CD4-positive, alpha-beta T cell (primary cell): ENCODE measurements at regions of chr13 and their contacts with region 1.

Region 1: GRCh38 chr13:94549232-94550061 is 46.5 kb downstream of the TGDS start:
- DNase-seq: peak; percentile 85 to 96 (median 92)
- ATAC-seq: peak; percentile 91
- H3K4me3 ChIP-seq: peak overlapping the region; percentile 75
- H3K4me3 Mint-ChIP-seq: peak overlapping the region; percentile 96
- H3K27ac ChIP-seq: peak overlapping the region; percentile 85 to 91
- H3K27ac Mint-ChIP-seq: peak overlapping the region; percentile 98
- H3K4me1 ChIP-seq: peaks cover 28% of the 10 kb centered on the region
- H3K4me1 Mint-ChIP-seq: peaks cover 22% of the 10 kb centered on the region
- H3K27me3 ChIP-seq: no peaks in the 10 kb centered on the region
- H3K27me3 Mint-ChIP-seq: peaks cover 7% of the 10 kb centered on the region
- CTCF ChIP-seq: no peak

Region 2: DNA sequence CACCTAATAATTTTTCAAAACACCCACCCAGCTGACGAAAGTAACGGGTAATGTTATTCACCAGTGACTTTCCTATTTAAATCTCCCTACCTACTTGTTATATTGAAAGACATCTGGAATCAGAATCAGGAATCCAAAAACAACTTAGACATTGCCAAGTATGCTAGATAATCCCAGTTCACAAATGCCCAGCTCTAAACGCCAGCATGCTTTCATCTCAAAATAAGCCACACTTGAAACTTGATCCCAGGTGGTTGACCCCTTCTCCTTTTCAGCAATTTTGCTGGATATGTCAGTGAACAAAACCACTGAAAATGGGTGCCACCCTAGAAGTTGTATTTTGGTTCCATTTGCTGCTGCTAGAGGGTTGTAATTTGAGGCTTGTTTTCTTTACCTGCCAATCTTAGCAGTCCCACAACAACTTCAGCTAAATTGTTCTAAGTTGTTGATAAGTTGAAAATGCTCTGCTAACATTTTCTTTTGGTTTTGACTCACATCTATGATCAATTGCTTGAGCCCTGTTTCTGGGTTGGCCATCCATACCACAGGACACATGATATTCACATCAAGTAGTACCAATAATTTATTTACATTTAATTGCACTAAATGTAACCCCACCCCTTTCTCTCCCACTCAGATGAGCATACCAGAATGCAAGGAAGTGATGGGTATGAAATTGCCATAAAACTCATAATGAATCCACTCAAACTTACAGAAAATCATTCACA is 136.4 kb before region 1 on chr13:
- CTCF ChIA-PET with region 1: no interaction called
- POLR2A ChIA-PET with region 1: no interaction called
- intact Hi-C with region 1: no loop called
- DNase-seq: no peak
- ATAC-seq: no peak
- H3K4me3 ChIP-seq: no peak overlapping the region
- H3K4me3 Mint-ChIP-seq: no peak overlapping the region
- H3K27ac ChIP-seq: no peak overlapping the region
- H3K27ac Mint-ChIP-seq: no peak overlapping the region
- H3K4me1 ChIP-seq: no peaks in the 10 kb centered on the region
- H3K4me1 Mint-ChIP-seq: no peaks in the 10 kb centered on the region
- H3K27me3 ChIP-seq: peaks cover 0 to 5% of the 10 kb centered on the region in 2 experiments
- H3K27me3 Mint-ChIP-seq: peaks cover 48% of the 10 kb centered on the region
- CTCF ChIP-seq: no peak

Region 3: DNA sequence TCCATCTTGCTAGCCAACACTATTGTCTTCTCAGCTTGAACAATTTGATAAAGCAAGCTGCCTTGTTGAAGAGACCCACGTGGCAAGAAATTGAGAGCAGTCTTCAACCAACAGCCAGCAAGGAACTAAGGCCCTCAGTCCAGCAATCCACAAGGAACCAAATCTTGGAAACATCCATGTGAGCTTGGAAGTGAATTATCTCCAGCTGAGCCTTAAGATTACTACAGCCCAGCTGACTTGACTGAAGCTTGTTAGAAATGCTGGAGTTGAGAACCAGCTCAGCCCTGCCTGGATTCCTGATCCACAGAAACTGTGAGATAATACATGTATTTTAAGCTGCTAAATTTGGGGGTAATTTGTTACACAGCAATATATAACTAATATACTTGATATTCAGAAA is 43.7 kb before region 1 on chr13:
- CTCF ChIA-PET with region 1: no interaction called
- POLR2A ChIA-PET with region 1: interaction called, 26 read pairs
- intact Hi-C with region 1: no loop called
- DNase-seq: no peak
- ATAC-seq: no peak
- H3K4me3 ChIP-seq: no peak overlapping the region
- H3K4me3 Mint-ChIP-seq: no peak overlapping the region
- H3K27ac ChIP-seq: no peak overlapping the region
- H3K27ac Mint-ChIP-seq: no peak overlapping the region
- H3K4me1 ChIP-seq: peaks cover 3% of the 10 kb centered on the region
- H3K4me1 Mint-ChIP-seq: peaks cover 24% of the 10 kb centered on the region
- H3K27me3 ChIP-seq: peaks cover 0 to 4% of the 10 kb centered on the region in 2 experiments
- H3K27me3 Mint-ChIP-seq: peaks cover 13% of the 10 kb centered on the region
- CTCF ChIP-seq: no peak

Region 4: GRCh38 chr13:94579063-94579462 is 29.6 kb after region 1 on chr13:
- CTCF ChIA-PET with region 1: no interaction called
- POLR2A ChIA-PET with region 1: interaction called, 3 read pairs
- intact Hi-C with region 1: loop called in 1 of 2 experiments (anchors 2 kb)
- DNase-seq: no peak
- ATAC-seq: no peak
- H3K4me3 ChIP-seq: no peak overlapping the region
- H3K4me3 Mint-ChIP-seq: no peak overlapping the region
- H3K27ac ChIP-seq: no peak overlapping the region
- H3K27ac Mint-ChIP-seq: no peak overlapping the region
- H3K4me1 ChIP-seq: no peaks in the 10 kb centered on the region
- H3K4me1 Mint-ChIP-seq: no peaks in the 10 kb centered on the region
- H3K27me3 ChIP-seq: no peaks in the 10 kb centered on the region
- H3K27me3 Mint-ChIP-seq: no peaks in the 10 kb centered on the region
- CTCF ChIP-seq: no peak

Region 5: DNA sequence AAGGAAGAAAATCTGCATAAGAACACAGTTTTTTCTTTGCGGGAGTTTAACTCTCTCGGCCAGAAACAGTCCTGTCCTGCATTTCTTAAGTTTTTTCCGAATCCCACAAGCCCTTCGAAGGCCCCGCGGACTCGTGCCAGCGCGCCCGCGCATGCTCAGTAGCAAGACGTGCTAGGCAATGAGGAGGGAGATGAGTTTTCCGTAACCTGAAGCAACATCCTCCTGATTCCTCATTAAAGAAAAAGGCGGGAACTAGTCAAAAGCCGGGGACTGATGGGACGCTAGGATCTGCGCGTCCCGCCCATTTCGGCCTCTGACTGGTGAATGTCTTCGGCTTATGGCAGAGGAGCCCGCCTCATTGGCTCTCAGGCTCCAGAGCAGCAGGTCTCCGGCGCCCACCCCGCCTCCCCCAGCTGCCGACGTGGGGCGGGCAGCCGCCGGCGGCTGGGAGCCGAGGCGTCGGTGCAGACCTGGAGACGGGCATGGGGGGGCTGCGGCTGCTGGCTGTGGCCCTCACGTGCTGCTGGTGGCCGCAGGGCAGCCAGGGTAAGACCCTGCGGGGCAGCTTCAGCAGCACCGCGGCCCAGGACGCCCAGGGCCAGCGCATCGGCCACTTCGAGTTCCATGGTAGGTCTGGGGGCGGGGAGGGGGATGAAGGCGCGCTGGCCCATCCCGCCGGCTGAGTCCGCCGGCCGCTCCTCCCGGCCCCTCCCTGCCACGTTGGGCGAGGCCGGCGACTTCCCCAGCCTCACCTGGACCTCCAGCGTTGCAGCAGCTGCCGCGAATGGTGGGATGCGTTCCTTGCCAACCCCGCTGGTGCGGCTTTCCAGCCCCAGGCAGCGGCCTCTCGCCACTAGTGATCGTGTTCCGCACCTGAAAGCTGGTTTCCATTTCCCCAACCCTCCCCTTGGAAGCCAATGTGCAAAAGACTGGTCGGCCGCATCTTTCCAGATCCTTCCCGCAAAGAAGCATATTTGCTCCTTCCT is 52.3 kb after region 1 on chr13 and contains the start of gene GPR180:
- CTCF ChIA-PET with region 1: interaction called, 4 read pairs
- POLR2A ChIA-PET with region 1: interaction called, 75 read pairs
- intact Hi-C with region 1: loop called in 1 of 2 experiments (anchors 1 kb)
- DNase-seq: peak; percentile 72 to 98 (median 84)
- ATAC-seq: peak; percentile 98
- H3K4me3 ChIP-seq: peak within 1 kb of the TSS; percentile 76
- H3K4me3 Mint-ChIP-seq: peak within 1 kb of the TSS; percentile 87
- H3K27ac ChIP-seq: peak within 1 kb of the TSS; percentile 59 to 61
- H3K27ac Mint-ChIP-seq: peak within 1 kb of the TSS; percentile 75
- H3K4me1 ChIP-seq: peaks cover 17% of the 10 kb centered on the region
- H3K4me1 Mint-ChIP-seq: peaks cover 31% of the 10 kb centered on the region
- H3K27me3 ChIP-seq: no peaks in the 10 kb centered on the region
- H3K27me3 Mint-ChIP-seq: no peaks in the 10 kb centered on the region
- CTCF ChIP-seq: no peak
- total RNA-seq, gene GPR180: 0.80 to 0.92 TPM

Region 6: GRCh38 chr13:94967183-94968039 is 418.0 kb after region 1 on chr13:
- CTCF ChIA-PET with region 1: no interaction called
- POLR2A ChIA-PET with region 1: no interaction called
- intact Hi-C with region 1: no loop called
- DNase-seq: peak in 1 of 14 experiments; percentile 5
- ATAC-seq: no peak
- H3K4me3 ChIP-seq: no peak overlapping the region
- H3K4me3 Mint-ChIP-seq: no peak overlapping the region
- H3K27ac ChIP-seq: no peak overlapping the region
- H3K27ac Mint-ChIP-seq: no peak overlapping the region
- H3K4me1 ChIP-seq: peaks cover 6% of the 10 kb centered on the region
- H3K4me1 Mint-ChIP-seq: peaks cover 11% of the 10 kb centered on the region
- H3K27me3 ChIP-seq: peaks cover 27 to 68% of the 10 kb centered on the region in 2 experiments
- H3K27me3 Mint-ChIP-seq: peaks cover 87% of the 10 kb centered on the region
- CTCF ChIP-seq: no peak

Region 7: DNA sequence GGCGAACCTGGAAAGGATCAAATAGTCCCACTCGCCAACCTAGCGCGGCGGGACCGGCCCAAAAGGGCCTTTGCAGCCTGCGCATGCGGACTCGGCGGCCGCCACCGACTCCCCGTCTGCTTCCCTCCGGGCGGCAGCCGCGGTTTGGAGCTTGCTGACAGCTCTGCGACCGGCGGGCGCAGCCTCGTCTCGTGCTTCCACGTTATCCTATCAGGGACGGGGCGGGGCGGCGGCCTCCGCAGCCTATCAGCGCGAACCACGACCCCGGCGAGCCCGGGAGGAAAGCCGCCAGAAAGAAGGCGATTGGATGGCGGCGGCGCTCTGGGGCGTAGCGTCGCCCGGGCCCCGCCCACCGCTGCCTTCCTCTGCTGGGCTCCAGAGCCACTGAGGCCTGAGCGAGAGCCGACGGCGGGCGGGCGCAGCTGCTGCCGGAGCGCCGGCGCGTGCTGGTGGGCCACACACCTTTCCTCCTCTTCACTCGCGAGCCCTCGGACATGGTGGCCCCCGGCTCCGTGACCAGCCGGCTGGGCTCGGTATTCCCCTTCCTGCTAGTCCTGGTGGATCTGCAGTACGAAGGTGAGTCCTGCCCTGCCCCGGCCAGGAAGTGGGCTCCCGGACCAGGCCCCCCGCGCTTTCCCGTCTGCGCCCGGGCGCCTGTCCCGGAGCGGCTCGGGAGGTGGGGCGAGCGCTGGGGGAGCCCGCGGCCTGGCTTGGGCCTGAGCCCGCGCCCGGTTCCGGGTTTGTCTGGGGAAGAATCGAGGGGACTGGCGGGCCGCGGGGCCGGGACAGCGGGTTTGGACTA is 1127.5 kb after region 1 on chr13 and contains the start of gene DNAJC3:
- CTCF ChIA-PET with region 1: no interaction called
- POLR2A ChIA-PET with region 1: interaction called, 8 read pairs
- intact Hi-C with region 1: loop called in 1 of 2 experiments (anchors 5 kb)
- DNase-seq: peak; percentile 95 to 99 (median 98)
- ATAC-seq: peak; percentile 94
- H3K4me3 ChIP-seq: peak within 1 kb of the TSS; percentile 92
- H3K4me3 Mint-ChIP-seq: peak within 1 kb of the TSS; percentile 91
- H3K27ac ChIP-seq: peak within 1 kb of the TSS; percentile 61 to 76
- H3K27ac Mint-ChIP-seq: peak within 1 kb of the TSS; percentile 89
- H3K4me1 ChIP-seq: peaks cover 21% of the 10 kb centered on the region
- H3K4me1 Mint-ChIP-seq: peaks cover 79% of the 10 kb centered on the region
- H3K27me3 ChIP-seq: no peaks in the 10 kb centered on the region
- H3K27me3 Mint-ChIP-seq: no peaks in the 10 kb centered on the region
- CTCF ChIP-seq: no peak
- total RNA-seq, gene DNAJC3: 17.6 to 17.7 TPM